ENCODE measurements at regions of chr1 and their contacts with region 1.

Region 1: DNA sequence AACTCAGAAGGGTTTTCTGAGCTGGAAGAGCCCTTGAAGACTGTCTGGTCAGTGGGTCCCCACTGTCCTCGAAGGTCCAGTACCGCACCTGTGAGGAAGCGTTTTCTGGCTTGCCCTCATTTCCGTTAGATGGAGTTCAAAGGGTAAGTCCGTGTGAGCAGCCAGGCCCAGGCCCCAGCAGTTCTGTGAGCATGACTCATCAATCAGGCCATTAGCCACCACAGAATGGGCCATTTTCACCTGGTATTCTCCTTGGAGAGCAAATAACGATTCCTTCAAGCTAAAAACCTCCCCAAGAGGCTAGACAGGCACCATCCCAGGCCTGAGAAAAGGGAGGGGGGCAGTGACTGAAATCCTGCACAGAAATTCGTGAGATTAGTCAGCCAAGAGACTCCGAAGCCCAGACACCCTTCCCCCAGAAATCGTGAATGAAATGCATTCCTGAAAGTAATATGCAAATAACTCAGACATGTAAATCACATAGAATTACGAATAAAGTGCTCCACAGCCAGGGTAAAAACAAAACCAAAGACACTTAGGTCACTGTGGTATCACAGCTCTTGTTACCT is 66.0 kb downstream of the BCAR3 start:
- DNase-seq: no peak
- H3K4me3 ChIP-seq: no peak overlapping the region
- H3K27ac ChIP-seq: peak overlapping the region in 28 of 59 donors; percentile 4 to 80 (median 49)
- H3K27me3 ChIP-seq: no peaks in the 10 kb centered on the region
- CTCF ChIP-seq: no peak

Region 2: GRCh38 chr1:93447516-93448291 is 168.0 kb before region 1 on chr1 and contains the start of gene FNBP1L:
- intact Hi-C with region 1: loop called in 1 of 2 experiments (anchors 10 kb)
- DNase-seq: peak in 8 of 10 donors; percentile 31 to 78 (median 64)
- H3K4me3 ChIP-seq: peak within 1 kb of the TSS; percentile 57 to 92 (median 78)
- H3K27ac ChIP-seq: peak within 1 kb of the TSS in 43 of 59 donors; percentile 17 to 83 (median 65)
- H3K27me3 ChIP-seq: peaks cover 0 to 50% (median 24%) of the 10 kb centered on the region in 45 donors
- CTCF ChIP-seq: peak in 2 of 56 donors; percentile 3 to 7
- total RNA-seq, gene FNBP1L: 12.4 to 32.1 (median 20.8) TPM